Endothelial cell of umbilical vein (primary cell): ENCODE measurements at regions of chr1 and their contacts with region 1.

Region 1: DNA sequence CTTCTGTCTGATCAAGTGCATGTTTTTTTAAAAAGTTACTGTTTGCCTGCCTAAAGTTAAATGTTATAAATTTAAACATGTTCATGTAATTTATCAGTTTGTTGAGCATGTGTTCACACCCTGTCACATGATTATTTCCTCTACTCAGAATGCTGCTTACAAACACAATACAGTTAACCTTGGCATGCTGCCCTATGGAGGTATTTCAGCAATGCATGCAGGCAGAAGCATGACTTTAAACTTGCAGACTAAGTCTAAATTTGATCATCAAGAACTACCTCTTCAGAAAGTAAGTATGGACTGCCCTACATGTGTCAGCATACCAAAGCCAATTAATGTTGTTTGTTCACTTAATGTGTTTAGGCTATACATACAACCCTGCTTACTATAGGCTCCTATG is 161.6 kb downstream of the LRRC40 start:
- DNase-seq: peak; percentile 84
- H3K4me3 ChIP-seq: no peak overlapping the region
- H3K27ac ChIP-seq: peak overlapping the region; percentile 77
- H3K4me1 ChIP-seq: peaks cover 20% of the 10 kb centered on the region
- H3K27me3 ChIP-seq: no peaks in the 10 kb centered on the region
- CTCF ChIP-seq: no peak
- POLR2A ChIP-seq: no peak

Region 2: GRCh38 chr1:69911301-69911801 is 132.5 kb before region 1 on chr1:
- CTCF ChIA-PET with region 1: no interaction called
- POLR2A ChIA-PET with region 1: no interaction called
- dilution Hi-C with region 1: no loop called
- intact Hi-C with region 1: loop called (anchors 2 kb)
- DNase-seq: peak; percentile 80
- H3K4me3 ChIP-seq: no peak overlapping the region
- H3K27ac ChIP-seq: peak overlapping the region; percentile 25
- H3K4me1 ChIP-seq: peaks cover 34% of the 10 kb centered on the region
- H3K27me3 ChIP-seq: no peaks in the 10 kb centered on the region
- CTCF ChIP-seq: no peak
- POLR2A ChIP-seq: no peak

Region 3: GRCh38 chr1:69976896-69977295 is 66.9 kb before region 1 on chr1:
- CTCF ChIA-PET with region 1: no interaction called
- POLR2A ChIA-PET with region 1: no interaction called
- dilution Hi-C with region 1: no loop called
- intact Hi-C with region 1: loop called (anchors 2 kb)
- DNase-seq: peak; percentile 73
- H3K4me3 ChIP-seq: no peak overlapping the region
- H3K27ac ChIP-seq: peak overlapping the region; percentile 41
- H3K4me1 ChIP-seq: peaks cover 15% of the 10 kb centered on the region
- H3K27me3 ChIP-seq: no peaks in the 10 kb centered on the region
- CTCF ChIP-seq: no peak
- POLR2A ChIP-seq: no peak